ENCODE measurements at regions of chr9 and their contacts with region 1.

Region 1: DNA sequence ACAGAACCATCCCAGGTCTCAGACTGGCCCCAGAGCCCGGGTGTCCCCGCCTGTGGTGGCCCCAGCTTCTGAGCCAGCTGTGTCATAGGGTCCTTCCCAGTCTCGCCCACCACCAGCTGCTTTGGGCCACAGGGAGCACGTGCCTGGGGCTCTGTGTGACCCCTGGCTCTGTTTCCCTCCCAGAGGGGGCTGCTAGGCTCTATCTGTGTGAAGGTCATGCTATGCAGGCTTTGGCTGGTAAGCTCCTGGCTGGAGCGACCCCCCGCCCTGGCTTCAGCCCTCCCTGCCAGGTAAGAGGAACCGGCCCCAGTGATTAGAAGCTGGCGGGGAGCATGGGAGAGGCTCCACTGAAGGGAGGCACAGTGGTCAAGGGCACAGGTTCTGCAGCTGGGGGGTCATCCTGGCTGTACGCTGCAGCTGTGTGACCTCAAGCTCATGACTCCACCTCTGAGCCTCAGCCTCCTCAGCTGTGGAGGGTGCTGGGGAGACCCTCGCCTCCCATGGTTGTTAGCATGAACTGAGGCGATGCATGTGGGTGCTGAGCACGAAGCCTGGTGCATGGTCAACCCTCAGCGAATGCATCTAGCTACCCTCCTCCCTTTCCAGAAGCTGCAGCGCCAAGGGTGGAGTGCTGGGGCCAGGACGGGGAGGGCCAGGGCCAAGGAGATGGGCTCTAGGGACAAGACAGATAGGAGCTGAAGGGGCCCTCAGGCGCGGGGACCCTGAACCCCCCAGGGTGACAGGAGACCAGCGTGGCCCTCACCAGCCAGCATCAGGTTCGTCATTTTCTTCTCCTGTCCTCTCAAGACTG is 163.9 kb upstream of the MVB12B start:
- DNase-seq: no peak
- H3K4me3 ChIP-seq: no peak overlapping the region
- H3K27ac ChIP-seq: no peak overlapping the region
- H3K4me1 ChIP-seq: no peaks in the 10 kb centered on the region
- H3K27me3 ChIP-seq: no peaks in the 10 kb centered on the region
- CTCF ChIP-seq: no peak
- EP300 ChIP-seq: no peak
- POLR2A ChIP-seq: no peak

Region 2: DNA sequence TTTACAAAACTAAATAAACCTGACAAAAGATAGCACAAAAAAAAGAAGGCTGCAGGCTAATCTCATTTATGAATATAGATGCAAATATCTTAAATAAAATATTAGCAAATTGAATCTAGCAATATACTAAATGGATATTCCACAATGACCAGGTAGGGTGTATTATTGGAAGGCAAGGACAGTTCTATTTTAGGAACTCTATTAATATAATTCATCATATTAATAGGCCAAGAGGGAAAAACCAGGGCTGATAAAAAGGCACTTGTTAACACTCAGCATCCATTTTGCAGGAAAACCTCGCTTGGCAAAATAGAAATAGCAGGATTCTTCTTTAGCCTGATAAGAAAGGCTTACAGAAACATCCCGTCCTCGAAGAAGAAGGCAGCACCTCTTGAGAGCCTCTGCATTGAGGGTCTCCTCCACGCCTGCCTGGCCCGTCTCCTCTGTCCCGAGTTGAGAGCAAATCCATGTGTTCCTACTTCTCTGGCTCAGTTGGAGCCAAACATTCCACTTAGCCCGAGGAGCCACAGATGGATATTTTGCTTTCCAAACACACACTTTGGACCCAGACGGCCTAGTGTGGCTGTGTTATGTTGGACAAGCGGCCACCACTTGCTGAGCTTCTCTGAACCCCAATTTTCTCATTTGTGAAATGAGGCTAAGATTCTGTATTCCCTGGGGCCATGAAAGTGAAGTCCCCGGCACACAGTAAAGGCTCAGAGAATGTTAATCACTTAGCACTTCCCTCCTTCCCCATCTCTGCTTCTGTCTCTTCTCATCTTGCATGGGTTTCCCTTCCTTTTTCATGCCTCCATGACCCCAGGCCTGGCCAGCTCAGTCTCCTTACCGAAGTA is 17.9 kb before region 1 on chr9:
- intact Hi-C with region 1: loop called in 1 of 4 experiments (anchors 1 kb)
- DNase-seq: peak in 1 of 5 donors; percentile 4
- H3K4me3 ChIP-seq: no peak overlapping the region
- H3K27ac ChIP-seq: no peak overlapping the region
- H3K4me1 ChIP-seq: no peaks in the 10 kb centered on the region
- H3K27me3 ChIP-seq: no peaks in the 10 kb centered on the region
- CTCF ChIP-seq: no peak
- EP300 ChIP-seq: no peak
- POLR2A ChIP-seq: no peak

Region 3: GRCh38 chr9:128055344-128056040 is 1892.7 kb after region 1 on chr9:
- intact Hi-C with region 1: no loop called
- DNase-seq: peak; percentile 59 to 69 (median 60)
- H3K4me3 ChIP-seq: no peak overlapping the region
- H3K27ac ChIP-seq: peak overlapping the region; percentile 42 to 89
- H3K4me1 ChIP-seq: peaks cover 21% of the 10 kb centered on the region
- H3K27me3 ChIP-seq: no peaks in the 10 kb centered on the region
- CTCF ChIP-seq: no peak
- EP300 ChIP-seq: peak; percentile 58
- POLR2A ChIP-seq: no peak

Measured in ovary (tissue), 10 donors.